ENCODE measurements at regions of chr3 and their contacts with region 1.

Region 1: GRCh38 chr3:56801662-56802377 is at the start of gene ARHGEF3:
- DNase-seq: peak; percentile 79
- H3K4me3 Mint-ChIP-seq: peak within 1 kb of the TSS; percentile 95
- H3K27ac Mint-ChIP-seq: peak within 1 kb of the TSS; percentile 85
- H3K4me1 Mint-ChIP-seq: peaks cover 36% of the 10 kb centered on the region
- H3K27me3 Mint-ChIP-seq: no peaks in the 10 kb centered on the region
- total RNA-seq, gene ARHGEF3: 38.3 and 38.6 TPM in 2 replicates

Region 2: DNA sequence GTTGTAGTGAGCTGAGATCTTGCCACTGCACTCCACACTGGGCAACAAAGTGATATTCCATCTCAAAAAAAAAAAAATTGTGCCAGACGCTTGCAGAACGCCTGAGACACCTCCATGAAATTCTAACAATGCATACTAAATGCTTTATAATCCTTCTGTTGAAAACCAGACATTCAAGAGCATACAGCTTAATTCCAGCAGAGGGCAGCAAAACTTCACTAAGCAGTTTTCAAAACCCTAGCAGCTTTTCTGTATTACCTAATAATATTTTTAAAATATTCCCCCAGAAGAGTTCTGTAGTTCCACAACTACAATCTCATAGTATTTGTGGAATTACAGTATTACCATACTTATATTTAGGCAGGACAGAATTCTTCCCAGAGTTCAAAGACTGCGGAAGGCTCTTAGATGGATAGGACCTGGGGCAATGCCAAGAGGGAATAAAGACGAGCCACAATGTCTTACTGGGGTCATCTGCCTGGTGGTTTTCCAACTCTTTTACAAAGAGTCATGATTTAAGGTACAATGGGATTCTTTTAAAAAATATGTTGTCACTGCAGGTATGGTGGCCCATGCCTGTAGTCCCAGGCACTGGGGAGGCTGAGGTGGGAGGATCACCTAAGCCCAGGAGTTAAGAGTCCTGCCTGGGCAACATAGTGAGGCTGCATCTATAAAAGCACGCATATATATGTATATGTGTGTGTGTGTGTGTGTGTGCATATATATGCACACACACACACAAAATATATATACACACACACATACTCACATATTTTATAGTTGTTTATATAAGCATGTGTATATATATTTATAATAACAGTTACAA is 99.1 kb before region 1 on chr3:
- intact Hi-C with region 1: loop called (anchors 1 kb)
- DNase-seq: peak; percentile 29
- H3K4me3 Mint-ChIP-seq: no peak overlapping the region
- H3K27ac Mint-ChIP-seq: no peak overlapping the region
- H3K4me1 Mint-ChIP-seq: peaks cover 22% of the 10 kb centered on the region
- H3K27me3 Mint-ChIP-seq: no peaks in the 10 kb centered on the region

Region 3: DNA sequence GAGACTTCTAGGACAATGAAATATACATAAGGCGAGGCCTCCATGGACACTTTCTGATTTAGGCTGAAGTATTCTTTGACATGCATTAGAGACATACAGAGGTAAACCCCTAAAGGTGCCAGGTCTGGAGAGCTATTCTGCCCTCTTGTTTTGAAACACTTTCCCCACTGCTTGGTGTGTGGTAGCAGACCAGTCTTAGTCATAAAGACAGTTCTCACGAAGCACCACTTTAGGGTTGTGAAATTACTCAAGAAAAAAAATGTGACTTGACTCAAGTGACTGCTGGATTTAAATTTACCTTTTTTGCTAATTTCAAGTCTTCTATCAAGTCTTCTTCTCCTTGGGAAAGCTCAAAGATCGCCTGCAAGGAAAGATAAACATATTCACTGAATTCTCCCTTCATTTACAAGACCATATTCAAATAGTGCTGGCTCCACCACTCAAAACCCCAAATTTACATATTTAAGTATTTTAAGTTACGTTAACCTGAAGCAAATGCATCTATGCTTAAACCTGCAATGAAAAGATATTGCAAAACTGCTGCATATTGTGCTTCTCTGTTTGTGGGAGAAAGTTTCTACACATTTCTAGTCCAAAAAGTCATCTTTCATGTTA is 48.5 kb before region 1 on chr3:
- intact Hi-C with region 1: loop called (anchors 1 kb)
- DNase-seq: peak; percentile 29
- H3K4me3 Mint-ChIP-seq: no peak overlapping the region
- H3K27ac Mint-ChIP-seq: peak overlapping the region; percentile 40
- H3K4me1 Mint-ChIP-seq: peaks cover 57% of the 10 kb centered on the region
- H3K27me3 Mint-ChIP-seq: no peaks in the 10 kb centered on the region

Region 4: GRCh38 chr3:56862352-56863074 is 60.7 kb after region 1 on chr3:
- intact Hi-C with region 1: loop called (anchors 1 kb)
- DNase-seq: no peak
- H3K4me3 Mint-ChIP-seq: peak overlapping the region; percentile 40
- H3K27ac Mint-ChIP-seq: peak overlapping the region; percentile 86
- H3K4me1 Mint-ChIP-seq: peaks cover 72% of the 10 kb centered on the region
- H3K27me3 Mint-ChIP-seq: no peaks in the 10 kb centered on the region

Region 5: DNA sequence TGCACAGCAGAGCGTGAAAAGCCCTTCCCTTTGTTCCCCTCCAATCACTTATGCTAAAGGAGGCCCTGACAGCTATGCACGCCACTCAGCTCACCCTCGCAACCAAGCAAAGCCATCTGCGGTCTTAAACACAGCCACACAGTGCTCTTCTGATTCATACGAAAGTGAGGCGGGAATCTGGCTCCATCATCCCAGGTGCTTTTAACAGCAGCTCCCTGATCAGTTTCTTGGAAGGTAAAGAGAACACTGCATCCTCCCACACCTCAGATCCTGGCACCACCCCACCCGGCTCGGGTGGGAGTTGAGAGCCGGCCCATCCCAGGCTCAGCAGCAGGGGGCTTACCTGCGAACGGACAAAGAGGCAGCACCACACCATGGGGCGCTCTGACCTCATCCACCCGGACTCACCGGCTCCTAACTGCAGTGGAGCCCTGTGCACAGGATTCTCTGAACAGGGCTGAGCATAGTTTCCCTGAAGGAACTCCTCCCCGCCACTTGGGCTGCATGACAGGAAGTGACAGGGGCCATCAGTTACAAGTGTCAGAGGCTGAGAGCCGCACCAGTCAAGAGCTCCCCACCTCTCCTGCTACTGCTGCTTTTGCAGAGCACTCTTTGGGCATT is 114.3 kb after region 1 on chr3:
- intact Hi-C with region 1: loop called (anchors 1 kb)
- DNase-seq: peak; percentile 72
- H3K4me3 Mint-ChIP-seq: peak overlapping the region; percentile 87
- H3K27ac Mint-ChIP-seq: peak overlapping the region; percentile 88
- H3K4me1 Mint-ChIP-seq: peaks cover 63% of the 10 kb centered on the region
- H3K27me3 Mint-ChIP-seq: no peaks in the 10 kb centered on the region

Region 6: DNA sequence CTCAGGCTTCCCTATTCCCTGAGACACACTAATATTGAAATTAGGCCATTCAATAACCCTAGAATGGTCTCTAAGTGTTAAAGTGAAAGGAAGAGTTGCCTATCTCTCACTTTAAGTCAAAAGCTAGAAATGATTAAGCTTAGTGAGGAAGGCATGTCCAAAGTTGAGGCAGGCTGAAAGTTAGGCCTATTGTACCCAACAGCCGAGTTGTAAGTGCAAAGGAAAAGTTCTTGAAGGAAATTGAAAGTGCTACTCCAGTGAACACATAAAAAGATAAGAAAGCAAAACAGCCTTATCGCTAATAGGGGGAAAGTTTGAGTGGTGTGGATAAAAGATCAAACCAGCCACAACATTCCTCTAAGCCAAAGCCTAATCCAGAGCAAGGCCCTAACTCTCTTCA is 140.7 kb after region 1 on chr3:
- intact Hi-C with region 1: no loop called
- DNase-seq: no peak
- H3K4me3 Mint-ChIP-seq: no peak overlapping the region
- H3K27ac Mint-ChIP-seq: peak overlapping the region; percentile 65
- H3K4me1 Mint-ChIP-seq: peaks cover 20% of the 10 kb centered on the region
- H3K27me3 Mint-ChIP-seq: peaks cover 10% of the 10 kb centered on the region

Region 7: DNA sequence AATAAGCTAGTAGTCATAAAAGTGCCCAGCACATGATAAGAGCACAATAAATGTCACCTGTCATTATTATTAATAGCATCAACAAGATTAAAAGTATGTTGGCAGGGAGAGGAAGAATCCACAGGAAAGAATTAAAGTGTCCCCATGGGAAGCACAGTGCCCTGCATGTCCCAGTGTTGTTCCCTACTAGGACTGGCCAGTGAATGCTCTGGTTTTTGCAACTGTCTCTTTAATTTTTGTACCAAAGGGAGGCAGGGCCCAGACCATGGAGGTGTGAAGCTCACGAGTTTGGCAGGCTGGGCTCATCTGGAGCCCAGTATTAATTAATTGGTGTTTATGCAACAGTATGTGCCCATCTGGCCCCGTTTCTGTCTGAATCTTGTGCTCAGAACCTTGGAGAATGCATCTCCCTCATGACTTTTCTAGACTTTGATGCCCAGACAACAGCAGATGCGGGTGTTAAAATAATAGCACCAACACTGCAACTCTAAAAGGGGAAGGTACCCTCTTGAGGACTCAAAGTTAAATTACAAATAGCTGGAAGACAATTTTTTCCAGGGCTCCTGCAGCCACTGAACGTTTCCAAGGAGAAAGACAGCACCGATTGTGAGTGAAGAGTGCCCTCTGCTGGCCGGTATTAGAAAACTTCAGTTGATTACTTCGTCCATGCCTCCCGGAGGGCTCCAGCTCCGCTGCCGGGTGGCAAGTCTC is 186.8 kb after region 1 on chr3:
- intact Hi-C with region 1: loop called (anchors 1 kb)
- DNase-seq: peak; percentile 44
- H3K4me3 Mint-ChIP-seq: no peak overlapping the region
- H3K27ac Mint-ChIP-seq: no peak overlapping the region
- H3K4me1 Mint-ChIP-seq: peaks cover 28% of the 10 kb centered on the region
- H3K27me3 Mint-ChIP-seq: peaks cover 24% of the 10 kb centered on the region

Measured in activated T-helper 2 cell treated with anti-CD3 and anti-CD28 coated beads, Interferon-gamma antibody, Interleukin-2, Interleukin-4, amounts not matched to agents 10 μg/mL and 5 μg/mL and 100 μg/mL, durations not matched to agents 14 hours and 24 hours and 36 hours (primary cell).